IMR-90 (cell line): ENCODE measurements at regions of chr5 and their contacts with region 1.

Region 1: GRCh38 chr5:173498286-173498685 is 118.2 kb downstream of the BOD1 start:
- DNase-seq: peak; percentile 64
- ATAC-seq: peak; percentile 53
- H3K4me3 ChIP-seq: no peak overlapping the region
- H3K27ac ChIP-seq: peak overlapping the region; percentile 42; the same call in 1 of the 2 replicates
- H3K4me1 ChIP-seq: peaks cover 26% of the 10 kb centered on the region
- H3K27me3 ChIP-seq: no peaks in the 10 kb centered on the region
- CTCF ChIP-seq: no peak
- POLR2A ChIP-seq: no peak
- RAD21 ChIP-seq: no peak

Region 2: DNA sequence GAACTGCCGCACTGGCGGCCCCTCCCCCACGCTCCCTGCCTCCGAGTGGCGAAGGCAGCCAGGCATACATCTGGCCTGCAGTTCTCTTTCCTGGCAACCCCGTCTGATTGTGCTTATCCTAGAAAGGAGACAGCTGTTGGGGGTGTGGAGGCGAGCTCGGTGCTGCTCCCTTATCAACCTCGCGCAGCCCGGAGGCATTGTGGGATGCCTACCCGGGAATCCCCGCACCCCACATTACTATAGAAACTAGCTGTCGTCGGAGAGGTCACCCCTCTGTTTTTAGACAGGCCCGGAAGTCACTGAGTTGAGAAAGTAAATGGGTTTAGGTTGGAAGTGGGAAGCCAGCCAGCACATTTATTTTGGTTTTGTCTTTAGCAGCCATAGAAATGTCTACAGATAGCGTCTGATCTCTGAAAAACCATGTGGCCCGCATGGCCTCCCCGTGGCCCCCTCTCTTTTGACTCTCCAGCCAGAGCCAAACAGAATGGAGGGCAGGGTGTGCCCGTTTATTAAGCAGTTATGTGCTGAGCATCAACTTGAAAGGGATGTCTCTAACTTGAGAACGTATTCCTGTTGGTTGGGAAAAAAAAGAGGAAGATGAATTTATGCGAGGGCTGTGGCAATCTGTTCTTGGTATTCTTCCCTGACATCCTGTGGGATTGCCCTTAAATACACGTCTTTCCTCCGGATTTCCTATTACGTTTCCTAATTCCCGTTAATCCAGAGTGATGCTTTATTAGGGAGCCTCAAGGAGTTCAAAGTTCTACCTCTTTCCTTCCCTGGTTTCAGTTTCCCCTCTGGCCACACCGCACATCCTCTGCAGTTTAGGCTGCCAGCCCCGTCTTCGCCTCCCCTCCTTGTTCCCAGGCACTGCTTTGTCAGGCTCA is 173.9 kb before region 1 on chr5:
- CTCF ChIA-PET with region 1: no interaction called
- POLR2A ChIA-PET with region 1: interaction called, 3 read pairs
- dilution Hi-C with region 1: no loop called
- in situ Hi-C with region 1: no loop called
- intact Hi-C with region 1: loop called (anchors 1 kb)
- DNase-seq: peak; percentile 89
- ATAC-seq: peak; percentile 16
- H3K4me3 ChIP-seq: peak overlapping the region; percentile 89
- H3K27ac ChIP-seq: peak overlapping the region; percentile 73
- H3K4me1 ChIP-seq: peaks cover 42% of the 10 kb centered on the region
- H3K27me3 ChIP-seq: no peaks in the 10 kb centered on the region
- CTCF ChIP-seq: no peak
- POLR2A ChIP-seq: peak; percentile 25
- RAD21 ChIP-seq: peak; percentile 5; the same call in 1 of the 2 replicates

Region 3: DNA sequence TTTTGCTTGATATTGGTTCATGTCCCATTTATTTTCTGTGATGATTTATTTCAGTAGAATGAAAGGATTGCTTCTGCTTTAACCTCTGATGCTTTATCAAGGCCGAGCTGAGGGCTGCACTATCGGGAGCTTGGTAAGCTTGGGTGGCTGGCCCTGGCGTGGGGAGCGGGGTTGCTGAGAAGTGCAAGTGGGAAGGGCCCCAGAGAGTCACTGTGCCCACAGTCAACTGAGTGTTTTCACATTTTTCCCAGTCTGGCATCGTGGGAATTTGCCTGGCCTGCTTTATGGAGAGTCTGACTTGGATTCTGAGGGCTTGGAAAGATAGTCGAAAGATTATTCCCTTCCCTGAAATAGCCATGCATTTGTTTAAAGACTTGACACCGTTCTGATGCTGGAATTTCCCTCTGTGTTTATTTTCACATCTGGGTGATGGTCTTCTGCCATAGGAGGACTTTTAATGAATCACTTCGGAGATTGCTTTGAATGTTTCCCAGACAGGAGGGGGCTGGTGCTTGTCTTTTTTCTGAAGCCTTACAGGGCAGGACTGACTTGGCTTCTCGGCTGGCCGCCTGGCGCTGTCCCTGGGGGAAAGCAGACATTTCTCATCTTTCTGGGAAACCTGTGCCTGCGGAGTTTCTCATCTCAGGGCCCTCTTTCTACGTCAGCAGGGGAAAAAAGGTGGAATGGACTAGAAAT is 20.8 kb before region 1 on chr5:
- CTCF ChIA-PET with region 1: interaction called, 11 read pairs
- POLR2A ChIA-PET with region 1: interaction called, 3 read pairs
- dilution Hi-C with region 1: no loop called
- in situ Hi-C with region 1: no loop called
- intact Hi-C with region 1: no loop called
- DNase-seq: peak; percentile 93
- ATAC-seq: peak; percentile 32
- H3K4me3 ChIP-seq: no peak overlapping the region
- H3K27ac ChIP-seq: peak overlapping the region; percentile 75
- H3K4me1 ChIP-seq: peaks cover 46% of the 10 kb centered on the region
- H3K27me3 ChIP-seq: no peaks in the 10 kb centered on the region
- CTCF ChIP-seq: no peak
- POLR2A ChIP-seq: no peak
- RAD21 ChIP-seq: no peak

Region 4: DNA sequence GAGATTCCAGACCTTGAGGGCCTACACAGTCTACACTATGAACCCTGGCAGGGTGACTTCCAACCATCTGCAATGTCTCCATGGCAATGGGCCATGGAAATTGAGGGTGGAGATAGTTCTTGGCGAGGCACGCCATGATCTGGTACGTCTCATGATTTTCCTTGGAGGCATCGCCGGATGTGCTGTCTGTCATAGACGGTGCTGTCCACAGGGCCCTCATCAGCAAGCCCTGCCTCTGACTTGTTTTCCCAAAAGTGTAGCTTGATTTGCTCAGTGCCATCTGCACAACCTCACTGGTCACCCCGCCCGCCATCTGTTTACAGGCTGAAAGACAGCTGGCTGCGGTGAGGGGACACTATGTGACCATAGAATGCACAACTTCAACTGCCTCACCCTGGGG is 44.7 kb after region 1 on chr5:
- CTCF ChIA-PET with region 1: no interaction called
- POLR2A ChIA-PET with region 1: no interaction called
- dilution Hi-C with region 1: no loop called
- in situ Hi-C with region 1: no loop called
- intact Hi-C with region 1: no loop called
- DNase-seq: no peak
- ATAC-seq: no peak
- H3K4me3 ChIP-seq: no peak overlapping the region
- H3K27ac ChIP-seq: no peak overlapping the region
- H3K4me1 ChIP-seq: peaks cover 2% of the 10 kb centered on the region; the same call in 1 of the 2 replicates
- H3K27me3 ChIP-seq: 0 out of 2 replicates have a peak, but pooled peaks cover 1% of the 10 kb centered on the region
- CTCF ChIP-seq: no peak
- POLR2A ChIP-seq: no peak
- RAD21 ChIP-seq: no peak

Region 5: DNA sequence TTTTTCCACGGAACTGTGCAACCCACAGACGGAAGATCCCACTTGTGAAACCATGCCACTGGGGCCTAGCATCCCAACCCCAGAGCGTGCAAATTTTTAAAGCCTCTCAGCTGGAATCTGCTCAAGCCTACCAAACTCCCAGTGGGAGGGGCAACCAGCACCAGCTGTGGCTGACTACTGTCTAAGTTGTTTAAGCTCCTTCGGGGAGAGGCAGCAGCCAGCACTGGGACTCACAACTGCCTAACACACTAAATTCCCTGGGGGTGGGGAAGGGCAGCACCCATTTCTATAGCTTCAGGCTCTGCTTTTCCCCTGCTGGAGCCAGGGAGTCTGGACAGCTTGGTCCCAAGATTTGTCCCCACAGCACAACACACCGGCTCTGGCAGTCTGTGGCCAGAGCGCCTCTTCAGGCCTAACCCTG is 938.5 kb after region 1 on chr5:
- CTCF ChIA-PET with region 1: no interaction called
- POLR2A ChIA-PET with region 1: no interaction called
- dilution Hi-C with region 1: no loop called
- in situ Hi-C with region 1: no loop called
- intact Hi-C with region 1: no loop called
- DNase-seq: no peak
- ATAC-seq: peak; percentile 83
- H3K4me3 ChIP-seq: no peak overlapping the region
- H3K27ac ChIP-seq: no peak overlapping the region
- H3K4me1 ChIP-seq: no peaks in the 10 kb centered on the region
- H3K27me3 ChIP-seq: no peaks in the 10 kb centered on the region
- CTCF ChIP-seq: no peak
- POLR2A ChIP-seq: no peak
- RAD21 ChIP-seq: no peak